ENCODE measurements at regions of chr2 and their contacts with region 1.

Region 1: DNA sequence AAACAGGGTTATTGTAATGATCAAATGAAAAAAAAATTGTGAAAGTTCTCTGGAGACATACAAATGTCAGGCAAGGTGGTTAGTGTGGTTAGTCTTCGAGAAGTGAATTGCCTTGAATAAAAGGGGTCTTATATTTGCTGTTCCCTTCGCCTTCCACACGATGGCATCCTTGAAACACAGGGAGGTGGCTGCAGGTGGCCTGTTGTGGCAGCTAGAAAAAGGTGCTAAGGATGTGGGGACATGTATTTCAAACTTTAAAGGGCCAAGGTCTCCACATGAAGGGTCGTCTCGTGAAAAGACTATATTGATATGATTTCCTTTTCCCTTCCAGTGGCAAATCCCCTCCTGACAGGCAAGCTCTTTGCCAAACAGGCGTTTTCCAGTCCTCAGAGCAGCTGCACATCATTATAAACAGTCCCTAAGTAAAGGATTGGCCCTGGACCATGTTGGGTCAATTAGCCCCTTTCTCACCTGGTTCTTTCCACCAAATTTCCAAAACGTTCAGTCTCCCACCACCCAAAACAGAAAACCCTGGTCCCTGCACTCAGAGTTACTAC is 68.5 kb downstream of the COPS8 start:
- DNase-seq: peak; percentile 87
- H3K4me3 Mint-ChIP-seq: no peak overlapping the region
- H3K27ac Mint-ChIP-seq: peak overlapping the region; percentile 91
- H3K4me1 Mint-ChIP-seq: peaks cover 36% of the 10 kb centered on the region
- H3K27me3 Mint-ChIP-seq: no peaks in the 10 kb centered on the region

Region 2: GRCh38 chr2:237122214-237122666 is 31.9 kb before region 1 on chr2:
- intact Hi-C with region 1: loop called (anchors 2 kb)
- DNase-seq: peak; percentile 78
- H3K4me3 Mint-ChIP-seq: no peak overlapping the region
- H3K27ac Mint-ChIP-seq: peak overlapping the region; percentile 30
- H3K4me1 Mint-ChIP-seq: peaks cover 3% of the 10 kb centered on the region
- H3K27me3 Mint-ChIP-seq: peaks cover 2% of the 10 kb centered on the region

Region 3: GRCh38 chr2:237427769-237428506 is 273.8 kb after region 1 on chr2:
- intact Hi-C with region 1: loop called (anchors 1 kb)
- DNase-seq: peak; percentile 84
- H3K4me3 Mint-ChIP-seq: peak overlapping the region; percentile 73
- H3K27ac Mint-ChIP-seq: peak overlapping the region; percentile 95
- H3K4me1 Mint-ChIP-seq: peaks cover 76% of the 10 kb centered on the region
- H3K27me3 Mint-ChIP-seq: no peaks in the 10 kb centered on the region

Region 4: GRCh38 chr2:237474931-237475703 is 321.0 kb after region 1 on chr2:
- intact Hi-C with region 1: loop called (anchors 1 kb)
- DNase-seq: peak; percentile 94
- H3K4me3 Mint-ChIP-seq: peak overlapping the region; percentile 87
- H3K27ac Mint-ChIP-seq: peak overlapping the region; percentile 93
- H3K4me1 Mint-ChIP-seq: peaks cover 17% of the 10 kb centered on the region
- H3K27me3 Mint-ChIP-seq: peaks cover 30% of the 10 kb centered on the region

Region 5: DNA sequence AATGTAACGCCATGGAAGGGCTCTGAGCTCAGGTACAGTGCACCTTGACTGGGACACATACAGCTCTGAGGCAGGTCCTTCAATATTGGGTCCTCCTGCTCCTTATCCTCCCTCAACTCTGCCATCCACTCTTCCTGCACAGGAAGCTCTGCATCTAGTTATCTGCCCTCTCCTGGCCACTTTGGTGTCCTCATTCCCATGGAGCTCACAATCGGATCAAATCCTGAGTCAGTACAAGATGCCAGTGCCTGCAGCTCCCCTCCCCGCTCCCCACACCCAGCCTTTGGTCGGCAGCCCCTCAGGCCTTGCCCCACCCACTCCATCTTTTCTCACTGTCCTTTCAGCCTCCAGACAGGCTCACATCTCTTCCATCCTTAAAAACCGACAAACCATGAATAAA is 531.2 kb after region 1 on chr2:
- intact Hi-C with region 1: loop called (anchors 5 kb)
- DNase-seq: no peak
- H3K4me3 Mint-ChIP-seq: no peak overlapping the region
- H3K27ac Mint-ChIP-seq: no peak overlapping the region
- H3K4me1 Mint-ChIP-seq: peaks cover 40% of the 10 kb centered on the region
- H3K27me3 Mint-ChIP-seq: no peaks in the 10 kb centered on the region

Region 6: GRCh38 chr2:237806334-237806733 is 652.2 kb after region 1 on chr2:
- intact Hi-C with region 1: no loop called
- DNase-seq: no peak
- H3K4me3 Mint-ChIP-seq: no peak overlapping the region
- H3K27ac Mint-ChIP-seq: no peak overlapping the region
- H3K4me1 Mint-ChIP-seq: no peaks in the 10 kb centered on the region
- H3K27me3 Mint-ChIP-seq: peaks cover 25% of the 10 kb centered on the region